B cell (primary cell): ENCODE measurements at regions of chr1 and their contacts with region 1.

Region 1: GRCh38 chr1:37692078-37692833 is at the start of gene CDCA8:
- DNase-seq: peak; percentile 99
- ATAC-seq: peak; percentile 89
- H3K4me3 ChIP-seq: peak within 1 kb of the TSS; percentile 52 to 91 (median 74)
- H3K4me3 Mint-ChIP-seq: peak within 1 kb of the TSS; percentile 99
- H3K27ac ChIP-seq: peak within 1 kb of the TSS; percentile 19 to 65
- H3K27ac Mint-ChIP-seq: peak within 1 kb of the TSS; percentile 94
- H3K4me1 ChIP-seq: peaks cover 19 to 34% of the 10 kb centered on the region in 2 donors
- H3K4me1 Mint-ChIP-seq: peaks cover 40% of the 10 kb centered on the region
- H3K27me3 ChIP-seq: no peaks in the 10 kb centered on the region
- H3K27me3 Mint-ChIP-seq: no peaks in the 10 kb centered on the region
- CTCF ChIP-seq: peak; percentile 67
- total RNA-seq, gene CDCA8: 1.3 and 1.5 TPM in 2 replicates

Region 2: GRCh38 chr1:36463803-36464604 is 1228.3 kb before region 1 on chr1 and contains the start of gene MRPS15:
- CTCF ChIA-PET with region 1: no interaction called
- POLR2A ChIA-PET with region 1: interaction called, 4 read pairs
- intact Hi-C with region 1: loop called (anchors 2 kb)
- DNase-seq: peak; percentile 97
- ATAC-seq: peak; percentile 98
- H3K4me3 ChIP-seq: peak within 1 kb of the TSS; percentile 75 to 96 (median 89)
- H3K4me3 Mint-ChIP-seq: peak within 1 kb of the TSS; percentile 92
- H3K27ac ChIP-seq: peak within 1 kb of the TSS; percentile 87 to 99
- H3K27ac Mint-ChIP-seq: peak within 1 kb of the TSS; percentile 98
- H3K4me1 ChIP-seq: peaks cover 11 to 17% of the 10 kb centered on the region in 2 donors
- H3K4me1 Mint-ChIP-seq: peaks cover 27% of the 10 kb centered on the region
- H3K27me3 ChIP-seq: no peaks in the 10 kb centered on the region
- H3K27me3 Mint-ChIP-seq: no peaks in the 10 kb centered on the region
- CTCF ChIP-seq: no peak
- total RNA-seq, gene MRPS15: 34.4 and 34.8 TPM in 2 replicates

Region 3: DNA sequence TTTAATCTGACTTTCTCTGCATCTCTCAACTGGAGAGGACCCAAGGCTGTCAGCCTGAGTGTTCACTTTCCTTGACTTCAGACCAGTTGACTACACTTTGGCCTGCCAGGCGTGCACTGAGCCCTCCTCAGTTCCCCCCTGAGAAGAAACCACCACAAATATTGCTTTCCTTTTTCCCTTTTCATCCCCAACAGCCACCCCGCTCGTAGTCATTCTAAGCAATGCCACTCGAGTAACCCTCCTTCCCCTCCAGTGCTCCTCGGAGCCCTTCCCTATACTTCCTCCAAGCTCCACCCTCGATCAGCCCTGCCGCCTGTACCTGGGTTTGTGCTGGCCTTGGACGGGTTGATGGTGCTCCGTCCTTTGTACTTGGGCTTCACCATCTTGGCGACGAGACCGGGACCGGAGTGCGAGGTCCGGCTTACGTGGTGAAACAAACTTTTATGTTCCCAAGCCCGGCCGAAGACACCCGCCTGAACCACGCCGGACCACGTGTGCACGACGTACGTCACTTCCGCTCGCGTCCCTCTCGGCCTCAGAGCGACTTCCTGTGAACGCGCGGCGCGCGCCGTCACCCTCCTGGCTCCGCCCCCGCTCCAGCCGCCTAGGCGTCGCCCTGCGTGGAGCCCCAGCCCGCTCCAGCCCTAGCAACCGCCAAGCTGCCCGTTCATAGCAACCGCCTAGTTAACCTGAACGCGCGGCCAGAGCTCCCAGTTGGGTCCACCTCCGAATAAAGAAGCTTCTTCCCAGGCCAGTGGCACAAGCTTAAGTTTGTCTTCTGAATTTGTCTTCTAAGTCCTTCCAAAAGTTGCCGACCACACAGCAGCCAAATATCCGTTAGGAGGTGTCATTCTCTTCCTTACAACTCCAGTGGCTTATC is 96.6 kb before region 1 on chr1 and contains the start of gene GNL2:
- CTCF ChIA-PET with region 1: interaction called, 328 read pairs
- POLR2A ChIA-PET with region 1: interaction called, 5 read pairs
- intact Hi-C with region 1: loop called (anchors 1 kb)
- DNase-seq: peak; percentile 99
- ATAC-seq: peak; percentile 98
- H3K4me3 ChIP-seq: peak within 1 kb of the TSS; percentile 67 to 96 (median 92)
- H3K4me3 Mint-ChIP-seq: peak within 1 kb of the TSS; percentile 99
- H3K27ac ChIP-seq: peak within 1 kb of the TSS; percentile 77 to 90
- H3K27ac Mint-ChIP-seq: peak within 1 kb of the TSS; percentile 93
- H3K4me1 ChIP-seq: peaks cover 16 to 20% of the 10 kb centered on the region in 2 donors
- H3K4me1 Mint-ChIP-seq: peaks cover 26% of the 10 kb centered on the region
- H3K27me3 ChIP-seq: peaks cover 0 to 3% (median 0%) of the 10 kb centered on the region in 4 experiments
- H3K27me3 Mint-ChIP-seq: no peaks in the 10 kb centered on the region
- CTCF ChIP-seq: no peak
- total RNA-seq, gene GNL2: 44.0 and 50.6 TPM in 2 replicates

Region 4: GRCh38 chr1:37793773-37794371 is 101.6 kb after region 1 on chr1 and contains the start of gene MANEAL:
- CTCF ChIA-PET with region 1: no interaction called
- POLR2A ChIA-PET with region 1: interaction called, 3 read pairs
- intact Hi-C with region 1: loop called (anchors 5 kb)
- DNase-seq: peak; percentile 71
- ATAC-seq: peak; percentile 90
- H3K4me3 ChIP-seq: peak within 1 kb of the TSS in 4 of 5 experiments; percentile 40 to 66 (median 62)
- H3K4me3 Mint-ChIP-seq: peak within 1 kb of the TSS; percentile 85
- H3K27ac ChIP-seq: no peak within 1 kb of the TSS
- H3K27ac Mint-ChIP-seq: peak within 1 kb of the TSS; percentile 53
- H3K4me1 ChIP-seq: peaks cover 15 to 18% of the 10 kb centered on the region in 2 donors
- H3K4me1 Mint-ChIP-seq: peaks cover 18% of the 10 kb centered on the region
- H3K27me3 ChIP-seq: peaks cover 0 to 17% (median 1%) of the 10 kb centered on the region in 4 experiments
- H3K27me3 Mint-ChIP-seq: peaks cover 12% of the 10 kb centered on the region
- CTCF ChIP-seq: no peak
- total RNA-seq, gene MANEAL: 6.6 and 7.8 TPM in 2 replicates

Region 5: DNA sequence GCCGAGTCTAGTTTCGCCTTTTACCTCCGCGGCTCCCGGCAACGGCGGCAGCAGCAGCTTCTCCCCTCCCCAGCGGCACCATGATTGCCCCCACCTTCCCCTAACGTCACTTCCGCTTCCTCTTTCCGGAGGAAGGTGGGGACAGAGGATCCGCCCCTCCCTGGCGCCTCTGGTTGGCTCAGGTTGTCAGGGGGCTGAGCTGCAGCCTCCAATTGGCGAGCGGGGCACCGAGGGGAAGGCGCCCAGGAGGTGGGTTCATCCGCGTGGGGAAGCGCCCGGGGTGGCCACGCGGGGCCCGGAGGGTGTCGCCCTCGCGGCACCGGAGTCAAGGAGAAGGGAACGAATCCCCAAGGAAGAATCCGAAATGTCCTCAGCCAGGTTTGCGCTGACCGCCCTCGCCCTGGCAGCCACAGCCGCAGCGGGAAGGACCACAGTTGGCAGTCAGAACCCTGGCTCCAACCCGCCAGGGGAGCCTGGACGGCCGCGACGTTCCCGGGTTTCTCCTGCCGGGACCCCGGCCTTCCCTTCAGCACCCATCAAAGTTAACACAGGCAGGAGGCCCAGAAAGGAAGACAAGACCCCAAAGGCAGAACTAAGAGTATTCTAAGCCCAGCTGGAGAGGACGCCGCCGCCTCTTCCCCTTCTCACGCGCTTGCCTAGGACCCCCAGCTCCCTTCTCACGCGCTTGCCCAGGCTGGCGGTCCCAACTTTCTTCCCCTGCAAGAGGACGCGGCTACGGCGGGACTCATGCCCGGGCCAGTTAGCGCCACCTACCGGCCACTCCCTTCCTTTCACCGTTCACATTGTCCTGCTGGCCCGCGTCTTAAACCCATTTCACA is 167.5 kb after region 1 on chr1 and contains the start of gene MTF1:
- CTCF ChIA-PET with region 1: interaction called, 13 read pairs
- POLR2A ChIA-PET with region 1: interaction called, 4 read pairs
- intact Hi-C with region 1: loop called (anchors 1 kb)
- DNase-seq: peak; percentile 98
- ATAC-seq: peak; percentile 98
- H3K4me3 ChIP-seq: peak within 1 kb of the TSS; percentile 72 to 100 (median 95)
- H3K4me3 Mint-ChIP-seq: peak within 1 kb of the TSS; percentile 97
- H3K27ac ChIP-seq: peak within 1 kb of the TSS; percentile 79 to 95
- H3K27ac Mint-ChIP-seq: peak within 1 kb of the TSS; percentile 94
- H3K4me1 ChIP-seq: peaks cover 16 to 18% of the 10 kb centered on the region in 2 donors
- H3K4me1 Mint-ChIP-seq: peaks cover 33% of the 10 kb centered on the region
- H3K27me3 ChIP-seq: no peaks in the 10 kb centered on the region
- H3K27me3 Mint-ChIP-seq: no peaks in the 10 kb centered on the region
- CTCF ChIP-seq: peak; percentile 94
- total RNA-seq, gene MTF1: 34.6 and 36.7 TPM in 2 replicates

Region 6: GRCh38 chr1:37946703-37947360 is 254.6 kb after region 1 on chr1 and contains the start of gene INPP5B:
- CTCF ChIA-PET with region 1: no interaction called
- POLR2A ChIA-PET with region 1: no interaction called
- intact Hi-C with region 1: no loop called
- DNase-seq: peak; percentile 79
- ATAC-seq: peak; percentile 100
- H3K4me3 ChIP-seq: peak within 1 kb of the TSS; percentile 50 to 73 (median 67)
- H3K4me3 Mint-ChIP-seq: peak within 1 kb of the TSS; percentile 91
- H3K27ac ChIP-seq: peak within 1 kb of the TSS in 1 of 2 donors; percentile 56
- H3K27ac Mint-ChIP-seq: peak within 1 kb of the TSS; percentile 86
- H3K4me1 ChIP-seq: peaks cover 14 to 19% of the 10 kb centered on the region in 2 donors
- H3K4me1 Mint-ChIP-seq: peaks cover 14% of the 10 kb centered on the region
- H3K27me3 ChIP-seq: no peaks in the 10 kb centered on the region
- H3K27me3 Mint-ChIP-seq: no peaks in the 10 kb centered on the region
- CTCF ChIP-seq: no peak
- total RNA-seq, gene INPP5B: 63.3 and 66.9 TPM in 2 replicates